IMR-90 (cell line): ENCODE measurements at regions of chr21 and their contacts with region 1.

Region 1: GRCh38 chr21:31731802-31732596 is at the start of gene SCAF4:
- DNase-seq: peak; percentile 87
- ATAC-seq: peak; percentile 90
- H3K4me3 ChIP-seq: peak within 1 kb of the TSS; percentile 92
- H3K27ac ChIP-seq: peak within 1 kb of the TSS; percentile 95
- H3K4me1 ChIP-seq: peaks cover 20% of the 10 kb centered on the region
- H3K27me3 ChIP-seq: no peaks in the 10 kb centered on the region
- CTCF ChIP-seq: no peak
- POLR2A ChIP-seq: peak; percentile 93
- RAD21 ChIP-seq: no peak
- total RNA-seq, gene SCAF4: 2.7 and 5.0 TPM in 2 replicates

Region 2: GRCh38 chr21:31713973-31714740 is 17.8 kb before region 1 on chr21:
- CTCF ChIA-PET with region 1: no interaction called
- POLR2A ChIA-PET with region 1: no interaction called
- dilution Hi-C with region 1: no loop called
- in situ Hi-C with region 1: no loop called
- intact Hi-C with region 1: loop called (anchors 2 kb)
- DNase-seq: peak; percentile 45
- ATAC-seq: peak; percentile 56
- H3K4me3 ChIP-seq: no peak overlapping the region
- H3K27ac ChIP-seq: no peak overlapping the region
- H3K4me1 ChIP-seq: peaks cover 9% of the 10 kb centered on the region
- H3K27me3 ChIP-seq: no peaks in the 10 kb centered on the region
- CTCF ChIP-seq: no peak
- POLR2A ChIP-seq: no peak
- RAD21 ChIP-seq: no peak

Region 3: DNA sequence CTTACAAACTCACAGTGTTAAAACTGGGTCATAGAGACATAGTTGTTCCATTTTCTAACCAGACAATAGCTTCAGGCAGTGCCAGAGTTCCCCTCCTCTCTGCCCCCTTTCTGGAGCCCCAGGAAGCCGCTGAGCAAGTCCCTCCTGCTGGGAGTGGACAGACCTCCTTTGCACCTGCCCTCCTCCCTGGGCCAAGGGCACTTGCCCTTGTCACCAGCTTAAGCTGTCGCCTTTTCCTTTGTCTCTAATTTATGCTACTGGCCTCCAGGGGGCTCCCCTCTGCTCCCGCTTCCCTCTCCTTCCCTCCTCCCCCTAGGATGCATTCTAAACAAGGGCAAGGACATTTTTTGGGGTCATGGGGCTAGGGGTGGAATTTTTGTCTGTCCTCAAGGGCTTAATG is 364.4 kb after region 1 on chr21:
- CTCF ChIA-PET with region 1: no interaction called
- POLR2A ChIA-PET with region 1: no interaction called
- dilution Hi-C with region 1: no loop called
- in situ Hi-C with region 1: no loop called
- intact Hi-C with region 1: no loop called
- DNase-seq: no peak
- ATAC-seq: no peak
- H3K4me3 ChIP-seq: no peak overlapping the region
- H3K27ac ChIP-seq: no peak overlapping the region
- H3K4me1 ChIP-seq: no peaks in the 10 kb centered on the region
- H3K27me3 ChIP-seq: peaks cover 5% of the 10 kb centered on the region
- CTCF ChIP-seq: peak; percentile 26; the same call in 1 of the 2 replicates
- POLR2A ChIP-seq: no peak
- RAD21 ChIP-seq: no peak